GM12878 (cell line): ENCODE measurements at regions of chrX and their contacts with region 1.

Region 1: DNA sequence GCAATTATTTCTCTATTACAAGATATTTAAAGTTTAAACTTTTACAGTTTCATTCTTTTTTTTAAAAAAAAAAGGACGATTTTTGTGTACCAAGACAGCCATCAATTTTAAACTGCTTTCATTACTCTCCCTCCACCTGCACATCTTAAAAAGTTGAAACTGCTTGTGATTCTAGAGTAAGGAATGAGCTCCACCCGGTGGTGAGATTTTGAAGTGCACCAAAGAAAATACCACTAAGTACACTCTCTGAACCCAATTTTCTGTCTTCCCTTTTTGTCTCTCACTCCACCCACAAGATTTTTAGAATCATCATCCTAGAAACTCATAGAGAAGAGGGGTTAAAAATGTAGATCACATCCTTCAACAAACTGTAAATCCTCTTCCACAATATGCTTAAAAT is 91.3 kb upstream of the WDR44 start:
- DNase-seq: peak; percentile 23
- ATAC-seq: peak; percentile 78
- H3K4me3 ChIP-seq: no peak overlapping the region
- H3K27ac ChIP-seq: no peak overlapping the region
- H3K4me1 ChIP-seq: no peaks in the 10 kb centered on the region
- H3K27me3 ChIP-seq: no peaks in the 10 kb centered on the region
- CTCF ChIP-seq: peak; percentile 66 to 75 (median 67)
- EP300 ChIP-seq: no peak
- POLR2A ChIP-seq: no peak
- RAD21 ChIP-seq: peak; percentile 88

Region 2: DNA sequence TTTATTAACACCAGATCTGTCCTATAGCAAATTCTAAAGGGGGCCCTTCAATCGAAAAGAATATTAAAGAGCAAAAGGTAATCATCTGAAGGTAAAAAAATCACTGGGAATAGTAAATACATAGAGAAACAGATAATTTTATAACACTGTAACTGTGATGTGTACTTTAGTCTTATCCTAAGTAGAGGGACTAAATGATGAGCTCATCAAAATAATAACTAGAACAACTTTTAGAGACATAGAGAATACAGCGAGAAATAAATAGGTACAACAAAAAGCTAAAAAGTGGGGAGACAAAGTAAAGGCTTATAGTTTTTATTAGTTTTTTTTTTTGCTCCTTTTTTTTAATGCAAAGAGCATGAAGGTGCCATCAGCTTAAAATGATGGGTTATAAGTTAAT is 1774.6 kb before region 1 on chrX:
- CTCF ChIA-PET with region 1: no interaction called
- POLR2A ChIA-PET with region 1: no interaction called
- RAD21 ChIA-PET with region 1: no interaction called
- SMC1A ChIA-PET with region 1: no interaction called
- in situ Hi-C with region 1: no loop called
- intact Hi-C with region 1: loop called (anchors 10 kb)
- DNase-seq: no peak
- ATAC-seq: no peak
- H3K4me3 ChIP-seq: no peak overlapping the region
- H3K27ac ChIP-seq: no peak overlapping the region
- H3K4me1 ChIP-seq: no peaks in the 10 kb centered on the region
- H3K27me3 ChIP-seq: no peaks in the 10 kb centered on the region
- CTCF ChIP-seq: no peak
- EP300 ChIP-seq: no peak
- POLR2A ChIP-seq: no peak
- RAD21 ChIP-seq: no peak

Region 3: GRCh38 chrX:116490104-116490503 is 1764.5 kb before region 1 on chrX:
- CTCF ChIA-PET with region 1: interaction called, 15 read pairs
- POLR2A ChIA-PET with region 1: no interaction called
- RAD21 ChIA-PET with region 1: interaction called, 9 read pairs
- SMC1A ChIA-PET with region 1: no interaction called
- in situ Hi-C with region 1: loop called (anchors 10 kb)
- intact Hi-C with region 1: loop called (anchors 10 kb)
- DNase-seq: no peak
- ATAC-seq: no peak
- H3K4me3 ChIP-seq: no peak overlapping the region
- H3K27ac ChIP-seq: no peak overlapping the region
- H3K4me1 ChIP-seq: no peaks in the 10 kb centered on the region
- H3K27me3 ChIP-seq: no peaks in the 10 kb centered on the region
- CTCF ChIP-seq: peak in 1 of 3 experiments; percentile 9; a peak in 1 of 6 replicates
- EP300 ChIP-seq: no peak
- POLR2A ChIP-seq: no peak
- RAD21 ChIP-seq: no peak

Region 4: DNA sequence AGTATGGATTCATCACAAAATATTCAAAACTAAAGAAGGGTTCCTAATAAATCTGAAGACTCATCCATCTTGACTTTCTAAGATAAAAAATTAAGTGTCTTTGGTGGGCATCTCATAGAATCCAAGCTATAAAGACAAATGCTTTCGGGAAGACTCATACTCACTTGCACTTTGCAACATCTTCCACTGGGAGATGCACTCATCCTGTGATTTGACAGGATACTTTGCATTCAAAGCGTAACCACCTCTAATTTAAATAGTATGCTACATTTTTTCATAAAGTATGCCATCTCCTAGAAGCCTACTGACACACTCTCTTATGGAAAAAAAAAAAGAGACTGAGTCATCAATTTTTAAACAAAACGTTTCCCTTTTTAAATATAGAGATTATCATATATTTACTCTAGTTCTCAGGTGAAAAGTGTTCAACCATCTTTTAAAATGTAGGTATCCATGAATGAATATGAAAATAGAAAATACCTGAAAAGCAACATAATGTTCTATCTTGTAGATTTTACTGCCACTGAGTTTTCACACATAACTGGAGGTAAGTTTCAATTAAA is 257.6 kb before region 1 on chrX:
- CTCF ChIA-PET with region 1: interaction called, 7 read pairs
- POLR2A ChIA-PET with region 1: no interaction called
- RAD21 ChIA-PET with region 1: interaction called, 12 read pairs
- SMC1A ChIA-PET with region 1: interaction called, 10 read pairs
- in situ Hi-C with region 1: loop called (anchors 10 kb)
- intact Hi-C with region 1: loop called (anchors 1 kb)
- DNase-seq: no peak
- ATAC-seq: peak; percentile 32; the same call in 1 of the 3 replicates
- H3K4me3 ChIP-seq: no peak overlapping the region
- H3K27ac ChIP-seq: no peak overlapping the region
- H3K4me1 ChIP-seq: no peaks in the 10 kb centered on the region
- H3K27me3 ChIP-seq: no peaks in the 10 kb centered on the region
- CTCF ChIP-seq: peak; percentile 34 to 47 (median 45); a peak in 4 of 6 replicates
- EP300 ChIP-seq: no peak
- POLR2A ChIP-seq: no peak
- RAD21 ChIP-seq: peak; percentile 79

Region 5: GRCh38 chrX:118226090-118226428 is 28.6 kb before region 1 on chrX:
- CTCF ChIA-PET with region 1: interaction called, 7 read pairs
- POLR2A ChIA-PET with region 1: no interaction called
- RAD21 ChIA-PET with region 1: no interaction called
- SMC1A ChIA-PET with region 1: interaction called, 14 read pairs
- in situ Hi-C with region 1: no loop called
- intact Hi-C with region 1: no loop called
- DNase-seq: no peak
- ATAC-seq: peak; percentile 87
- H3K4me3 ChIP-seq: no peak overlapping the region
- H3K27ac ChIP-seq: no peak overlapping the region
- H3K4me1 ChIP-seq: no peaks in the 10 kb centered on the region
- H3K27me3 ChIP-seq: no peaks in the 10 kb centered on the region
- CTCF ChIP-seq: peak; percentile 35 to 51 (median 39); a peak in 5 of 6 replicates
- EP300 ChIP-seq: no peak
- POLR2A ChIP-seq: no peak
- RAD21 ChIP-seq: peak; percentile 81

Region 6: GRCh38 chrX:118420462-118420861 is 165.9 kb after region 1 on chrX:
- CTCF ChIA-PET with region 1: no interaction called
- POLR2A ChIA-PET with region 1: no interaction called
- RAD21 ChIA-PET with region 1: no interaction called
- SMC1A ChIA-PET with region 1: no interaction called
- in situ Hi-C with region 1: no loop called
- intact Hi-C with region 1: no loop called
- DNase-seq: no peak
- ATAC-seq: peak; percentile 84
- H3K4me3 ChIP-seq: no peak overlapping the region
- H3K27ac ChIP-seq: no peak overlapping the region
- H3K4me1 ChIP-seq: no peaks in the 10 kb centered on the region
- H3K27me3 ChIP-seq: no peaks in the 10 kb centered on the region
- CTCF ChIP-seq: no peak
- EP300 ChIP-seq: no peak
- POLR2A ChIP-seq: no peak
- RAD21 ChIP-seq: no peak